ENCODE measurements at regions of chr12 and their contacts with region 1.

Region 1: DNA sequence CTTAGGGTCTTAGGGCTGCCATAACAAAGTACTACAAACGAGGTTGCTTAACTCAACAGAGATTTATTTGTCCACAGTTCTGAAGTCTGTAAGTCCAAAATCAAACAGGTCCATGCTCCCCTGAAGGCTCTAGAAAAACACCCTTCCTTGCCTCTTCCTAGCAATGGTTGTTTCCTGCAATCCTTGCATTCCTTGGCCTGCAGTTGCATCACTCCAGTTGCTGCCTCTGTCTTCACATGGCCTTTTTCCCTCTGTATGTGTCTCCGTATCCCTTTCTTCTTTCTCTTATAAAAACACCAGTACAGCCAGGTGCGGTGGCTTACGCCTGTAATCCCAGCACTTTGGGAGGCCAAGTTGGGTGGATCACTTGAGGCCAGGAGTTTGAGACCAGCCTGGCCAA is 17.4 kb downstream of the KCNMB4 start:
- DNase-seq: no peak
- H3K4me3 ChIP-seq: no peak overlapping the region
- H3K27ac ChIP-seq: no peak overlapping the region
- H3K4me1 ChIP-seq: 0 out of 2 replicates have a peak, but pooled peaks cover 8% of the 10 kb centered on the region
- H3K27me3 ChIP-seq: no peaks in the 10 kb centered on the region
- CTCF ChIP-seq: no peak

Region 2: GRCh38 chr12:70443062-70443673 is 59.7 kb after region 1 on chr12:
- CTCF ChIA-PET with region 1: no interaction called
- POLR2A ChIA-PET with region 1: interaction called, 40 read pairs
- intact Hi-C with region 1: no loop called
- DNase-seq: no peak
- H3K4me3 ChIP-seq: no peak overlapping the region
- H3K27ac ChIP-seq: peak overlapping the region; percentile 49; the same call in 1 of the 2 replicates
- H3K4me1 ChIP-seq: peaks cover 27% of the 10 kb centered on the region
- H3K27me3 ChIP-seq: no peaks in the 10 kb centered on the region
- CTCF ChIP-seq: no peak

Region 3: GRCh38 chr12:70691018-70691672 is 307.7 kb after region 1 on chr12:
- CTCF ChIA-PET with region 1: no interaction called
- POLR2A ChIA-PET with region 1: no interaction called
- intact Hi-C with region 1: no loop called
- DNase-seq: no peak
- H3K4me3 ChIP-seq: no peak overlapping the region
- H3K27ac ChIP-seq: no peak overlapping the region
- H3K4me1 ChIP-seq: no peaks in the 10 kb centered on the region
- H3K27me3 ChIP-seq: no peaks in the 10 kb centered on the region
- CTCF ChIP-seq: no peak

Measured in PC-9 (cell line).